CD4-positive, alpha-beta T cell (primary cell): ENCODE measurements at regions of chr15 and their contacts with region 1.

Region 1: GRCh38 chr15:69576035-69576526 is 123.5 kb downstream of the RPLP1 start:
- DNase-seq: peak; percentile 44 to 81 (median 69)
- ATAC-seq: peak; percentile 76
- H3K4me3 ChIP-seq: no peak overlapping the region
- H3K4me3 Mint-ChIP-seq: no peak overlapping the region
- H3K27ac ChIP-seq: no peak overlapping the region
- H3K27ac Mint-ChIP-seq: no peak overlapping the region
- H3K4me1 ChIP-seq: peaks cover 34% of the 10 kb centered on the region
- H3K4me1 Mint-ChIP-seq: peaks cover 33% of the 10 kb centered on the region
- H3K27me3 ChIP-seq: no peaks in the 10 kb centered on the region
- H3K27me3 Mint-ChIP-seq: no peaks in the 10 kb centered on the region
- CTCF ChIP-seq: peak; percentile 78

Region 2: DNA sequence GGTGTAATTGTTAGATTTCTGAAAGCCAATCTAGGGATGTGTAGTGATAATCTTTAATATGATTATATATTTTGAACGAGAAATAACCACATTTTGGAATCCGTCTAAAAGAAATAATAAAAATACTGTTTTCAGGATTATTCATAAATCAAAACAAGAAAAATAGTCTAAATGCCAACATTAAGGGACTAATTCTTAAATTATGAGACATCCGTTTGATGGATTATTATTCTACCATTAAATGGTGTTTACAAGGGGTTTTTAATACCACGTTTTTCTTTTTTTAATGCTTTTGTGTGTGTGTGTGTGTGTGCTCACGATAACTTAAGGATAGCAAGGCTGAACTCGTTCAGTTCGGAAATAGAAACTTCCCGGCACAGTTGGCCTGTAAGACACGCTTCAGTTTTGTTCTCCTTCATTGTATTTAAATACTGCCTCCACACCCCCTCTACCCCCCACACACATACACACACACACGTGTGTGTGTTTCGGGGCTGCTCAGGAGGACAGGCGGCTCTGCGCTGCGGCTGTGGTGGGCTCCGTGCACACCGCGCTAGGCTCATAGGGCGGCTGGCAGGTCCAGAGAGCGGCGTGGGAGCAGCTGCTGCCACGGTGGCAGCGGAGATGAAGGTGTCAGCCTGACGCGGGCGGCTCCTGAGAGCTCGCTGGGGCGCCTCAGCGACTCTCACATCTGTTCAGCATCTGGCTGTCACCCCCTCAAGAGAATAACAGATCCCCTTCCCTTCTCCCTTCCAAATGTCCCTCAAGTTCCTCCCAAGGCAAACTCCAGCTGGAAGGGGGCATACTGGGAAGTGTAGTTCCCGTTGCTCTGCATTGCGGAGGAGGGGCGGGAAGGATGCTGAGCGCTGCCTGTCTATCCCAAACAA is 732.4 kb before region 1 on chr15:
- CTCF ChIA-PET with region 1: no interaction called
- POLR2A ChIA-PET with region 1: no interaction called
- intact Hi-C with region 1: no loop called
- DNase-seq: peak in 6 of 14 experiments; percentile 7 to 58 (median 24)
- ATAC-seq: peak; percentile 54
- H3K4me3 ChIP-seq: peak overlapping the region; percentile 28
- H3K4me3 Mint-ChIP-seq: peak overlapping the region; percentile 67
- H3K27ac ChIP-seq: no peak overlapping the region
- H3K27ac Mint-ChIP-seq: no peak overlapping the region
- H3K4me1 ChIP-seq: peaks cover 8% of the 10 kb centered on the region
- H3K4me1 Mint-ChIP-seq: peaks cover 8% of the 10 kb centered on the region
- H3K27me3 ChIP-seq: peaks cover 30 to 57% of the 10 kb centered on the region in 2 experiments
- H3K27me3 Mint-ChIP-seq: peaks cover 71% of the 10 kb centered on the region
- CTCF ChIP-seq: no peak

Region 3: GRCh38 chr15:69375151-69375790 is 200.8 kb before region 1 on chr15:
- CTCF ChIA-PET with region 1: no interaction called
- POLR2A ChIA-PET with region 1: no interaction called
- intact Hi-C with region 1: no loop called
- DNase-seq: no peak
- ATAC-seq: no peak
- H3K4me3 ChIP-seq: no peak overlapping the region
- H3K4me3 Mint-ChIP-seq: no peak overlapping the region
- H3K27ac ChIP-seq: no peak overlapping the region
- H3K27ac Mint-ChIP-seq: no peak overlapping the region
- H3K4me1 ChIP-seq: no peaks in the 10 kb centered on the region
- H3K4me1 Mint-ChIP-seq: no peaks in the 10 kb centered on the region
- H3K27me3 ChIP-seq: peaks cover 0 to 2% of the 10 kb centered on the region in 2 experiments
- H3K27me3 Mint-ChIP-seq: peaks cover 19% of the 10 kb centered on the region
- CTCF ChIP-seq: no peak

Region 4: DNA sequence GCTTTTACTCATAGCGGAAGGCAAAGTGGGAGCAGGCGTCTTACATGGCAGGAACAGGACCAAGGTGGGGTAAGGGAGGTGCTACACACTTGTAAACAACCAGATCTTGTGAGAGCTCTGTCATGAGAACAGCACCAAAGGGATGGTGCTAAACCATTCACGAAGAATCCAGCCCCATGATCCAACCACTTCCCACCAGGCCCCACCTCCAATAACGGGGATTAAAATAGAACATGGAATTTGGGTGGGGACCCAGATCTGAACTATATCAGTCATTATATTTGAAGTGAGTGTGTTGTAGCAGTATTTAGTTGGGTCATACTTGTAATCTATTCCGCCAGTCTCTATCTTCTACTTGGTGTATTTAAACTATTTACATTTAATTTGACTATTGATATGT is 67.4 kb after region 1 on chr15:
- CTCF ChIA-PET with region 1: no interaction called
- POLR2A ChIA-PET with region 1: no interaction called
- intact Hi-C with region 1: no loop called
- DNase-seq: no peak
- ATAC-seq: no peak
- H3K4me3 ChIP-seq: no peak overlapping the region
- H3K4me3 Mint-ChIP-seq: no peak overlapping the region
- H3K27ac ChIP-seq: no peak overlapping the region
- H3K27ac Mint-ChIP-seq: no peak overlapping the region
- H3K4me1 ChIP-seq: peaks cover 2% of the 10 kb centered on the region
- H3K4me1 Mint-ChIP-seq: no peaks in the 10 kb centered on the region
- H3K27me3 ChIP-seq: no peaks in the 10 kb centered on the region
- H3K27me3 Mint-ChIP-seq: no peaks in the 10 kb centered on the region
- CTCF ChIP-seq: no peak

Region 5: GRCh38 chr15:69719527-69720240 is 143.6 kb after region 1 on chr15:
- CTCF ChIA-PET with region 1: no interaction called
- POLR2A ChIA-PET with region 1: interaction called, 3 read pairs
- intact Hi-C with region 1: loop called in 1 of 2 experiments (anchors 5 kb)
- DNase-seq: peak; percentile 22 to 91 (median 56)
- ATAC-seq: peak; percentile 81
- H3K4me3 ChIP-seq: no peak overlapping the region
- H3K4me3 Mint-ChIP-seq: peak overlapping the region; percentile 52
- H3K27ac ChIP-seq: peak overlapping the region in 1 of 2 donors; percentile 4
- H3K27ac Mint-ChIP-seq: peak overlapping the region; percentile 84
- H3K4me1 ChIP-seq: peaks cover 70% of the 10 kb centered on the region
- H3K4me1 Mint-ChIP-seq: peaks cover 76% of the 10 kb centered on the region
- H3K27me3 ChIP-seq: no peaks in the 10 kb centered on the region
- H3K27me3 Mint-ChIP-seq: no peaks in the 10 kb centered on the region
- CTCF ChIP-seq: no peak

Region 6: DNA sequence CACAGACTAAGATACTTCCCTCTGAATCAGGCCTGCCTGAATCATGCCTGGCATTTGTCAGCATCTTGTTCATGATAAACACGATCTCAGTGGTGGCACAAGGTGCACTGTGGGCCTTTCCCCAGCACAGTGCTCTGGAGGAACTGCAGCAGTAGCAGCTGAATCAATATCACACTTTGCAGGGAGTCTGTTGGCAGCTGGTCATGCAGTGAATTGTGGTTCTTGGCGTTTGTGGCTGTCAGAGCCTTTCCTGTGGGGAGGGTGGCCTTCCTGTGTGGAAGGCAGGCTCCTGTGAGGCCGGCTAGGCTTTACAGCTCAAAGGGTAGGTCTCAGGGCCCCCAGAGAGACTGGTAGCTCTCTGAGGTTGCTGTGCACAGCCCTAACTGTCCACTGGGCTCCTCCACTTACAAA is 576.0 kb after region 1 on chr15:
- CTCF ChIA-PET with region 1: no interaction called
- POLR2A ChIA-PET with region 1: no interaction called
- intact Hi-C with region 1: loop called in 1 of 2 experiments (anchors 5 kb)
- DNase-seq: peak in 2 of 14 experiments; percentile 26 to 47
- ATAC-seq: no peak
- H3K4me3 ChIP-seq: no peak overlapping the region
- H3K4me3 Mint-ChIP-seq: no peak overlapping the region
- H3K27ac ChIP-seq: no peak overlapping the region
- H3K27ac Mint-ChIP-seq: no peak overlapping the region
- H3K4me1 ChIP-seq: no peaks in the 10 kb centered on the region
- H3K4me1 Mint-ChIP-seq: no peaks in the 10 kb centered on the region
- H3K27me3 ChIP-seq: no peaks in the 10 kb centered on the region
- H3K27me3 Mint-ChIP-seq: no peaks in the 10 kb centered on the region
- CTCF ChIP-seq: no peak

Region 7: GRCh38 chr15:70461992-70462391 is 885.9 kb after region 1 on chr15:
- CTCF ChIA-PET with region 1: no interaction called
- POLR2A ChIA-PET with region 1: no interaction called
- intact Hi-C with region 1: loop called (anchors 1 to 2 kb)
- DNase-seq: no peak
- ATAC-seq: no peak
- H3K4me3 ChIP-seq: no peak overlapping the region
- H3K4me3 Mint-ChIP-seq: no peak overlapping the region
- H3K27ac ChIP-seq: no peak overlapping the region
- H3K27ac Mint-ChIP-seq: no peak overlapping the region
- H3K4me1 ChIP-seq: peaks cover 15% of the 10 kb centered on the region
- H3K4me1 Mint-ChIP-seq: peaks cover 10% of the 10 kb centered on the region
- H3K27me3 ChIP-seq: no peaks in the 10 kb centered on the region
- H3K27me3 Mint-ChIP-seq: no peaks in the 10 kb centered on the region
- CTCF ChIP-seq: no peak

Region 8: DNA sequence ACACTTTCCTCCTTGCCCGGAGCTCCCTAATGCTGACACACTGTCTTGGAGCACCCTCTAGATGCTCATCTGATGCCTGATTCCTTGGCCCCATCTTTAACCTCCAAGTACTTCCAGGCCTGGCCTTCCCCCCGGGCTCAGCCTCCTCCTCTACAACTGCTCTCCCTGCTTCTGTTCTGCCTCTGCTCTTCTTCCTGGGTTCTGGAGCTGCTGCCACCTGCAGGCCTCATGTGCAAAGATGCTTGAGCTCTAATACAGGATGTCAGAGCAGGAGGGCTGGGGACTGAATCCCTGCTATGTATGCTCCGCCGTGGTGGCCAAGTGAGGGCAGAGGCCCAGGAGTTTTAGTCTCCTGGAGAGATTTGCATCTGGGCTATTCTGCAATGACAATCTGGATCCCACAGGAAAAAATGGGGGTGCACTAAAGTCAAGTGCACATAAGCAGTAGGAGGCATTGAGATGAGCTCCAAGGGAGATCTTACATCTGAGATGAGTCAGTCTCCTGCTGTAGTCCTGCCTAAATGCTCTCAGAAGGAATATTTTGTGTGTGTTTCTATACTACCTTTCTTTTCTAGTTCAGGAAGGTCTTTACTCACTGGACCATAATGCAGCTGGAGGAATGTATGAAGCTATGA is 890.9 kb after region 1 on chr15:
- CTCF ChIA-PET with region 1: no interaction called
- POLR2A ChIA-PET with region 1: no interaction called
- intact Hi-C with region 1: loop called in 1 of 2 experiments (anchors 2 kb)
- DNase-seq: peak in 13 of 14 experiments; percentile 35 to 75 (median 45)
- ATAC-seq: peak; percentile 84
- H3K4me3 ChIP-seq: no peak overlapping the region
- H3K4me3 Mint-ChIP-seq: no peak overlapping the region
- H3K27ac ChIP-seq: no peak overlapping the region
- H3K27ac Mint-ChIP-seq: no peak overlapping the region
- H3K4me1 ChIP-seq: peaks cover 6% of the 10 kb centered on the region
- H3K4me1 Mint-ChIP-seq: peaks cover 5% of the 10 kb centered on the region
- H3K27me3 ChIP-seq: peaks cover 0 to 2% of the 10 kb centered on the region in 2 experiments
- H3K27me3 Mint-ChIP-seq: no peaks in the 10 kb centered on the region
- CTCF ChIP-seq: peak; percentile 70

Region 9: DNA sequence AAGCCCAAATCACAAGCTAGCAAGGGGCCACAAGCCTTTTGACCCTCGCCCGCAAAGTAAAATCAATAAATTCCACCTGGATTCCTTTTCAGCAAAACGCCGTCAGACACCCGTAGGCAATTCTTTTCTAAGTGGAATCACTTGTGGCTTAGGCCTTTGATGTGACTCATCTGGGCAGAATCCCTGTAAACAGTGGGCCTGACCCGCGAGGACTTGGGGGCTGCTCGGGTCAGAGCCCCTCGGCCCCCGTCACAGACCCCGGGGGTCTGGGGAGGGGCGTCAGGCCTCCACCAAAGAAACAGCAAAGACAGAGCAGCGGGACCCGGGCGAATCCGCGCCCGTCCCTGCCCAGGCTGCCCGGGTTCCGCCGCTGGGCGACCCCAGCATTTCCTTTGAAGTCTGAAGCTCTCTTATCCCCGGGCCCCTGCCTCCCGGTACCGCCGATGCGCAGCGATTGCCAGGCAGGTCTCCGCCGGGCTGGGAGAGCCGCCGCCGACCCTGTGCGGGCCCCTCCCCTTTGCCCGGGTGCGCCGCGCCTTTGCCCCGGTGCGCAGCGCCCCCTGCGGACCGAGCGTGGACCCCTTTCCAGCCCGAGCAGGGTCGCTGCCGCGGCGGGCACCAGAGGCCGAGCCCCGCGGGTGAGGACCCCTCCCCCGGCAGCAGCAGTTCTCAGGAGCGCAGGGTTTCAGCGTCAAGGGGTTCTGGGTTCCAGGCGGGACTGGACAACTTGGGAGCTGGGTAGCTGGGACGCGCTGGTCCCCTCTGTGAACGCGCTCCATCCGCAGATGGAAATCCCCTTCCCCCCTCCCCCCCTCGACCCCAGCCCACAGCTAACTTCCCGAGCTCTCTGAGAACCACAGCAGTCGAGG is 1009.0 kb after region 1 on chr15:
- CTCF ChIA-PET with region 1: no interaction called
- POLR2A ChIA-PET with region 1: no interaction called
- intact Hi-C with region 1: loop called (anchors 5 to 10 kb)
- DNase-seq: peak; percentile 24 to 73 (median 46)
- ATAC-seq: peak; percentile 86
- H3K4me3 ChIP-seq: no peak overlapping the region
- H3K4me3 Mint-ChIP-seq: peak overlapping the region; percentile 68
- H3K27ac ChIP-seq: no peak overlapping the region
- H3K27ac Mint-ChIP-seq: no peak overlapping the region
- H3K4me1 ChIP-seq: peaks cover 16% of the 10 kb centered on the region
- H3K4me1 Mint-ChIP-seq: peaks cover 21% of the 10 kb centered on the region
- H3K27me3 ChIP-seq: peaks cover 0 to 5% of the 10 kb centered on the region in 2 experiments
- H3K27me3 Mint-ChIP-seq: peaks cover 15% of the 10 kb centered on the region
- CTCF ChIP-seq: peak; percentile 76